Activated CD4-positive, alpha-beta T cell treated with anti-CD3 and anti-CD28 coated beads for 36 hours (primary cell): ENCODE measurements at regions of chr15 and their contacts with region 1.

Region 1: GRCh38 chr15:90931737-90932659 is at the start of gene HDDC3:
- DNase-seq: peak; percentile 96
- ATAC-seq: peak; percentile 68
- H3K4me3 Mint-ChIP-seq: peak within 1 kb of the TSS; percentile 99
- H3K27ac Mint-ChIP-seq: peak within 1 kb of the TSS; percentile 99
- H3K4me1 Mint-ChIP-seq: peaks cover 47% of the 10 kb centered on the region
- H3K27me3 Mint-ChIP-seq: no peaks in the 10 kb centered on the region
- total RNA-seq, gene HDDC3: 34.2 to 41.2 TPM

Region 2: GRCh38 chr15:89575146-89575655 is 1356.8 kb before region 1 on chr15 and contains the start of gene TICRR:
- CTCF ChIA-PET with region 1: no interaction called
- POLR2A ChIA-PET with region 1: no interaction called
- intact Hi-C with region 1: loop called in 1 of 2 experiments (anchors 10 kb)
- DNase-seq: peak; percentile 96
- ATAC-seq: peak; percentile 99
- H3K4me3 Mint-ChIP-seq: peak within 1 kb of the TSS; percentile 89
- H3K27ac Mint-ChIP-seq: peak within 1 kb of the TSS; percentile 72
- H3K4me1 Mint-ChIP-seq: peaks cover 26% of the 10 kb centered on the region
- H3K27me3 Mint-ChIP-seq: peaks cover 5% of the 10 kb centered on the region
- total RNA-seq, gene TICRR: 25.7 to 28.9 TPM

Region 3: GRCh38 chr15:90265271-90266060 is 666.5 kb before region 1 on chr15 and contains the start of gene NGRN:
- CTCF ChIA-PET with region 1: no interaction called
- POLR2A ChIA-PET with region 1: interaction called, 3 read pairs
- intact Hi-C with region 1: loop called (anchors 2 to 5 kb)
- DNase-seq: peak; percentile 95
- ATAC-seq: peak; percentile 87
- H3K4me3 Mint-ChIP-seq: peak within 1 kb of the TSS; percentile 98
- H3K27ac Mint-ChIP-seq: peak within 1 kb of the TSS; percentile 99
- H3K4me1 Mint-ChIP-seq: peaks cover 37% of the 10 kb centered on the region
- H3K27me3 Mint-ChIP-seq: no peaks in the 10 kb centered on the region
- total RNA-seq, gene NGRN: 22.0 to 23.9 TPM

Region 4: DNA sequence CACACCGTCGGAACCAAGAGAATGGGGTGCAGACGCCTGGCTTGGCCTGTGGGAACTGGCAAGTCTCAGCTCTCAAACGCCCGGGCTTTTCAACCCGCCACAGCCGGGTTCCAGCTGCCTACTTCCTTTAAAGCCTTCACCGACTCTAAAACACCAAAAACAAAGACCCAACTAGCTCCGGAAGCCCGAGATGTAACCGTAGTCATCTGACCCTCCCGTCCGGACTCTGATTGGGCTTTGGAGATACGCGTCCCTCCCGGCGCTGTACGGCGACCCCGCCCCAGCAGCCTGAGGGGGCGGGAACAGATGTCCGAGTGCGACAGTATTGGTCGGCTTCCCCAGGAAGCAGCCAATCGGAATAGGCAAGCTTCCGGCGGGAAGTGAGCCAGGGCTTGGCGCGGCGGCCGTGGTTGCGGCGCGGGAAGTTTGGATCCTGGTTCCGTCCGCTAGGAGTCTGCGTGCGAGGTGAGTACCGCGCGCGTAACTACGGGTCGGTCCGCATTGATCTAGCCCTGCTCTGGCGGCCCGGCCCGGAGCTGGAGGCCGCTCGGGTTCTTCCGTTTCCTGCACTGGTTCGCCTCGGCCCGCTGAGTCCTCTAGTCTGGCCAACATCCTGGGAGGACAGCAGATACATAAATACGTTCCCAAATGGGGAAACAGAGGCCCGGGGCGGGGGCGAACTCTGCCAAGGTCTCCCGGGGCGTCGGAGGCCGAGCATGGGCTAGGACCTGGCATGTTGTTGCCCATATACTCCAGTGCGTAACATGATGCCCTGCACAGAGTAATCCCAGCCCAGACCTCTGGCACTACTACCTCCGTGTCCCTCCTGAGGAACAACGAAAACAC is 214.8 kb before region 1 on chr15 and contains the start of gene BLM:
- CTCF ChIA-PET with region 1: interaction called, 8 read pairs
- POLR2A ChIA-PET with region 1: interaction called, 7 read pairs
- intact Hi-C with region 1: loop called (anchors 1 to 2 kb)
- DNase-seq: peak; percentile 96
- ATAC-seq: peak; percentile 100
- H3K4me3 Mint-ChIP-seq: peak within 1 kb of the TSS; percentile 80
- H3K27ac Mint-ChIP-seq: peak within 1 kb of the TSS; percentile 83
- H3K4me1 Mint-ChIP-seq: peaks cover 17% of the 10 kb centered on the region
- H3K27me3 Mint-ChIP-seq: no peaks in the 10 kb centered on the region
- total RNA-seq, gene BLM: 59.5 to 73.7 TPM

Region 5: GRCh38 chr15:90902040-90902839 is 29.8 kb before region 1 on chr15:
- CTCF ChIA-PET with region 1: interaction called, 164 read pairs
- POLR2A ChIA-PET with region 1: interaction called, 15 read pairs
- intact Hi-C with region 1: loop called (anchors 1 kb)
- DNase-seq: peak; percentile 83
- ATAC-seq: peak; percentile 79
- H3K4me3 Mint-ChIP-seq: peak overlapping the region; percentile 81
- H3K27ac Mint-ChIP-seq: peak overlapping the region; percentile 88
- H3K4me1 Mint-ChIP-seq: peaks cover 16% of the 10 kb centered on the region
- H3K27me3 Mint-ChIP-seq: no peaks in the 10 kb centered on the region

Region 6: GRCh38 chr15:90986807-90987507 is 55.0 kb after region 1 on chr15:
- CTCF ChIA-PET with region 1: interaction called, 11 read pairs
- POLR2A ChIA-PET with region 1: no interaction called
- intact Hi-C with region 1: no loop called
- DNase-seq: no peak
- ATAC-seq: no peak
- H3K4me3 Mint-ChIP-seq: no peak overlapping the region
- H3K27ac Mint-ChIP-seq: no peak overlapping the region
- H3K4me1 Mint-ChIP-seq: peaks cover 26% of the 10 kb centered on the region
- H3K27me3 Mint-ChIP-seq: no peaks in the 10 kb centered on the region

Region 7: GRCh38 chr15:91852741-91853510 is 920.9 kb after region 1 on chr15:
- CTCF ChIA-PET with region 1: no interaction called
- POLR2A ChIA-PET with region 1: no interaction called
- intact Hi-C with region 1: loop called in 1 of 2 experiments (anchors 2 kb)
- DNase-seq: peak; percentile 82
- ATAC-seq: peak; percentile 68
- H3K4me3 Mint-ChIP-seq: peak overlapping the region; percentile 74
- H3K27ac Mint-ChIP-seq: peak overlapping the region; percentile 88
- H3K4me1 Mint-ChIP-seq: peaks cover 55% of the 10 kb centered on the region
- H3K27me3 Mint-ChIP-seq: peaks cover 3% of the 10 kb centered on the region